ENCODE measurements at regions of chr7 and their contacts with region 1.

Region 1: DNA sequence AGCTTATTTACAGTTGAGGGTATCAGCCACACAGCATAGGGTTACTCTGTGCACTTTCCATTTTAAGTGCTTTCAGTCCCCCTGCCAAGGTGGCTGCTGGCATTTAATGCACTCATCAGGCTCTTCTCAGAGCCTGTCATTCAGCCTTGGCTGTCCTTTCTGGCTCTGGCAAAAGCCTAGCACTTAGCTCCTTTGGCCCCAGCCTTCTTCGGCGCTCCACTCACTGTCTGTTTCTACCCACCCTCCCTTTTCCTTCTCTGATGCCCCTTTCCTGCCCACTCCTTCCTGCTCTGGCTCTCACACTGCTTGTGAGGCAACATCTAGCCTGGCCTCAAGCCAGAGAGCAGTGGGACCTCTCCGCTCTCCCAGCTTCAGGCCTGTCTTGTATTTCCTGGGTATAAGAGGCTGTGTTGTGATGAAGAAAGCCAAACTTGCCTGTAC is 60.2 kb downstream of the WIPF3 start:
- DNase-seq: peak; percentile 70 to 80
- ATAC-seq: peak; percentile 90 to 91
- H3K4me3 ChIP-seq: peak overlapping the region; percentile 11 to 42 (median 32)
- H3K27ac ChIP-seq: peak overlapping the region; percentile 84 to 96 (median 89)
- H3K4me1 ChIP-seq: peaks cover 69 to 77% of the 10 kb centered on the region in 2 donors
- H3K27me3 ChIP-seq: no peaks in the 10 kb centered on the region
- CTCF ChIP-seq: no peak
- POLR2A ChIP-seq: peak in 1 of 2 donors; percentile 15

Region 2: DNA sequence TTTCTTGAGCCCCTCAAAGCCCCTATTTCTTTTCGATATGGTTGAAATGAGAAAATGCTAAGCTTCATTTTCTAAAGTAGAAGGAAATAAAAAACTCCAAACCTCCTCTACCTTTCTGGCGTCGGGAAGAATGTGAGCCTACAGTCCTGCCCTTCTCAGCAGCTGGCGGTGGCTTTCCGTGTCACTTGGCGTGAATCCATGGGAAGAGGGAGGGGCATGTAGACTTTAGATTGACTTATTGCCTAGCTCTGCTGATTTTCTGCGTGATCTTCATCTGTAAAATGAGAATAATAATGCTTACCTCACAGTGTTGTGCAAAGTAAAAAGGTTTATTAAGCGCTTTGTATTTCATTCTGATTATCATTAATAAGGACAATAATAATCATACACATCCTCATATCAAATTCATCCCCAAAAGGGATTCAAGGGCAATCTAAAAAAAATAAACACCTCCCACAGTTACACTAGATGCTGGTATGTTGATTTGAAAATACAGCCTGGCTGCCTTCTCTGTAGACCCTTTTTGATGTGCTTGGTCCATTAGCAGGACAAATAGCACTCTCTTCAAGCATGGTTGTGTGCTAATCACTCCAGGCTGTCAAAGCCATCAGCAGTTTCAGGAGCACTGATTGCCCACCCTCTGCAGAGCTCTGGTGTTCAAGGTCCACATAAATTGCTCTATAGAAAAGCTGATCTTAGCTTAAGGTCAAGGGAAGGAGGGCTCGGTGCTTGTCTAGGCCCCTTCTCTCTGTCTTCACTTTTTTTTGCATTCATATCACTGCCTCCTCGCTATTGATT is 267.7 kb before region 1 on chr7:
- in situ Hi-C with region 1: no loop called
- intact Hi-C with region 1: no loop called
- DNase-seq: no peak
- ATAC-seq: no peak
- H3K4me3 ChIP-seq: no peak overlapping the region
- H3K27ac ChIP-seq: no peak overlapping the region
- H3K4me1 ChIP-seq: no peaks in the 10 kb centered on the region
- H3K27me3 ChIP-seq: no peaks in the 10 kb centered on the region
- CTCF ChIP-seq: no peak
- POLR2A ChIP-seq: no peak

Region 3: DNA sequence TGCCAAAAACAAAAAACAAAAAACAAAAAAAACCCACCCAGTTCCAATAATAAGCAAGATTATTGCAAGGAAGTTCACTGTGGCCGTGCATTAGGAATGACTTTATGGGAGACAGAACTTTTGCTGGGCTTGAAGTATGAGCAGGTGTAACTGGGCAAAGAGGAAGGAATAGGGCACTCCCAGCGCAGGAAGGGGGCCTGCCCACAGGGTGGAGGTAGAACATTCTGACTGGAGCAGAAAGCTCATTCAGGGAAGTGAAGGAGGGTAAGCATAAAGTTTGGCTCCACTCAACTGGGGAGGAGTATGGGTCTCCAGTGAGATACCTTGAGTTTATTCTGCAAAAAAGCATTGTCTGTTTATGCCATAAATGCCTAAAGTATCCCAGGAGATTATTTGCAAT is 102.3 kb before region 1 on chr7:
- in situ Hi-C with region 1: no loop called
- intact Hi-C with region 1: loop called (anchors 5 kb)
- DNase-seq: peak in 1 of 2 donors; percentile 23
- ATAC-seq: peak; percentile 48 to 60
- H3K4me3 ChIP-seq: no peak overlapping the region
- H3K27ac ChIP-seq: no peak overlapping the region
- H3K4me1 ChIP-seq: peaks cover 10 to 20% of the 10 kb centered on the region in 2 donors
- H3K27me3 ChIP-seq: no peaks in the 10 kb centered on the region
- CTCF ChIP-seq: peak in 4 of 5 experiments; percentile 31 to 39 (median 34)
- POLR2A ChIP-seq: no peak

Measured in gastrocnemius medialis (tissue), 4 donors.